Endothelial cell of umbilical vein (primary cell): ENCODE measurements at regions of chr19 and their contacts with region 1.

Region 1: DNA sequence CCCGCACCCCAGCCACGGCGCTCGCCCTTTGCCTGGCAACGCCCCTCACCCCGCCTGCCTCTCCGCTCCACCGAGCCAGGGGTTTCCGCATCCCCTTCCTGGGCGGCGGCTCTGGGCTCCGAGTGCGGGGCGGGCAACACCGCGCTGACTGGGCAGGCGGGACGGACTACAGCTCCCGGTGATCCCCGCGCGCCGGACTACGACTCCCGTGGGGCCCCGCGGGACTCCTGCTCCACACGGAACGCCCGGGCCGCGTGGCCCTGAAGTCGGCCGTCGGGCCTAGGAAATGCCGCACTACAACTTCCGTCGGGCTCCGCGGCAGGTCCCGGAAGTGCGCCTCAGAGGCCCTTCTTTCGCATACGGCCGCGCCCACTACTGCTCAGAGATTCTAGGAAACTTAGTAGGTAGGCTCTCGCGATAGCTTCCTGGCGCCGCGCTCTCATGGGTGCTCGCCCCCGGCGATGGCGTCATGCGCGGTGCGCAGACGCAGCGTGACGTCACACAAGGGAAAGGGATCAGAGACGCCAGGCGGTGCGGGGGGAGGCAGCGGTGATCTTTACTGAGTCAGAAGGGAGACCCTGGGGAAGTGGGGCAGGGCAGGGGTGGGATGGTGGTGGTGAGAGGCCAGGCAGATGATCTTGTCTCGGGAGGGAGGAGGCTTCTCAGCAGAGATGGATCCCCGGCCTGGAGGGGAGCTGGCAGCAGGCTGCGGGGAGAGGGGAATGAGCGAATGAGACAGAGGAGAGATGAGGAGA is at the start of gene JOSD2:
- DNase-seq: peak; percentile 99
- H3K4me3 ChIP-seq: peak within 1 kb of the TSS; percentile 56 to 76 (median 75)
- H3K27ac ChIP-seq: peak within 1 kb of the TSS; percentile 39
- H3K4me1 ChIP-seq: peaks cover 7% of the 10 kb centered on the region
- H3K27me3 ChIP-seq: no peaks in the 10 kb centered on the region
- CTCF ChIP-seq: no peak
- POLR2A ChIP-seq: peak; percentile 56
- total RNA-seq, gene JOSD2: 33.8 and 37.4 TPM in 2 replicates

Region 2: GRCh38 chr19:50376166-50377050 is 134.8 kb before region 1 on chr19 and contains the start of gene NR1H2:
- CTCF ChIA-PET with region 1: interaction called, 4 read pairs
- POLR2A ChIA-PET with region 1: no interaction called
- dilution Hi-C with region 1: no loop called
- intact Hi-C with region 1: loop called (anchors 2 kb)
- DNase-seq: peak; percentile 96
- H3K4me3 ChIP-seq: peak within 1 kb of the TSS; percentile 69 to 83 (median 77)
- H3K27ac ChIP-seq: peak within 1 kb of the TSS; percentile 94
- H3K4me1 ChIP-seq: peaks cover 13% of the 10 kb centered on the region
- H3K27me3 ChIP-seq: no peaks in the 10 kb centered on the region
- CTCF ChIP-seq: no peak
- POLR2A ChIP-seq: peak; percentile 64
- total RNA-seq, gene NR1H2: 46.7 and 50.6 TPM in 2 replicates

Region 3: GRCh38 chr19:50383852-50384684 is 127.2 kb before region 1 on chr19 and contains the start of gene POLD1:
- CTCF ChIA-PET with region 1: no interaction called
- POLR2A ChIA-PET with region 1: no interaction called
- dilution Hi-C with region 1: no loop called
- intact Hi-C with region 1: loop called (anchors 1 kb)
- DNase-seq: peak; percentile 99
- H3K4me3 ChIP-seq: peak within 1 kb of the TSS; percentile 71 to 94 (median 80)
- H3K27ac ChIP-seq: peak within 1 kb of the TSS; percentile 63
- H3K4me1 ChIP-seq: peaks cover 16% of the 10 kb centered on the region
- H3K27me3 ChIP-seq: no peaks in the 10 kb centered on the region
- CTCF ChIP-seq: no peak
- POLR2A ChIP-seq: peak; percentile 79
- total RNA-seq, gene POLD1: 63.9 and 73.8 TPM in 2 replicates

Region 4: GRCh38 chr19:50431343-50432220 is 79.7 kb before region 1 on chr19:
- CTCF ChIA-PET with region 1: no interaction called
- POLR2A ChIA-PET with region 1: no interaction called
- dilution Hi-C with region 1: no loop called
- intact Hi-C with region 1: loop called (anchors 1 kb)
- DNase-seq: peak; percentile 86
- H3K4me3 ChIP-seq: peak overlapping the region in 2 of 3 experiments; percentile 39 to 51
- H3K27ac ChIP-seq: no peak overlapping the region
- H3K4me1 ChIP-seq: peaks cover 6% of the 10 kb centered on the region
- H3K27me3 ChIP-seq: peaks cover 4 to 13% of the 10 kb centered on the region in 2 experiments
- CTCF ChIP-seq: no peak
- POLR2A ChIP-seq: no peak

Region 5: DNA sequence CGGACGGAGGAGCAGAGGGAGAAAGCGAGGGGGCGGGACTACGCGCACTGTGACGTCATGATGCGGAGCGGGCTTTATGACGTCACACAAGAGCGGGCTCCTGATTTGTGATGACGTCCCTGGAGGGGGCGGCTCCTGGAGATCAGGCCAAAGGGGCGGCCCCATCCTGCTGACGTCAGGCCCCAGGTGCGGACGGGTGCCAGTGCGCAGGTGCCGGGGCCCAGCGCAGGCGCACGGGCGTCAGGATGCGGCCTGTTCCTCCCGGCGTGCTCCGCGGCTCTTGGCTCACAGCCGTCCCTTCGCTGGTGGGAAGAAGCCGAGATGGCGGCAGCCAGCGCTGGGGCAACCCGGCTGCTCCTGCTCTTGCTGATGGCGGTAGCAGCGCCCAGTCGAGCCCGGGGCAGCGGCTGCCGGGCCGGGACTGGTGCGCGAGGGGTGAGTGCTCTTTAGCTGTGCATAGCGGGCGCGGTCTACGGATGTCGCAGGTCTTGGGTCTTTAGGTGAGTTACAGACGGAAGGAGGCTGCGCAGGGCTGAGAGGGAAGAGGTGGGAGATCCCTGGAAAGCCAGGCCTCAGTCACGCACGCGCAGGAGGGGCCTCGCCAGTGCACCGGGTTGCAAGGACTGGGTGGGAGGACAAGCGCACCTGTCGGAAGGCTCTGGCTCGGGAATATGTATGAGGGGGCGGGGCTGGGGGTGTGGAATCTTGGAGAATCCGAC is 34.9 kb before region 1 on chr19 and contains the starts of genes EMC10 and GARIN5A:
- CTCF ChIA-PET with region 1: interaction called, 3 read pairs
- POLR2A ChIA-PET with region 1: no interaction called
- dilution Hi-C with region 1: no loop called
- intact Hi-C with region 1: loop called (anchors 1 kb)
- DNase-seq: peak; percentile 94
- H3K4me3 ChIP-seq: peak within 1 kb of the TSS; percentile 84 to 98 (median 87)
- H3K27ac ChIP-seq: peak within 1 kb of the TSS; percentile 48
- H3K4me1 ChIP-seq: peaks cover 7% of the 10 kb centered on the region
- H3K27me3 ChIP-seq: no peaks in the 10 kb centered on the region
- CTCF ChIP-seq: no peak
- POLR2A ChIP-seq: peak; percentile 96
- total RNA-seq, gene EMC10: 101 and 106 TPM in 2 replicates
- total RNA-seq, gene GARIN5A: 0.44 and 0.62 TPM in 2 replicates

Region 6: GRCh38 chr19:50493175-50493574 is 18.1 kb before region 1 on chr19:
- CTCF ChIA-PET with region 1: no interaction called
- POLR2A ChIA-PET with region 1: no interaction called
- dilution Hi-C with region 1: no loop called
- intact Hi-C with region 1: no loop called
- DNase-seq: no peak
- H3K4me3 ChIP-seq: no peak overlapping the region
- H3K27ac ChIP-seq: no peak overlapping the region
- H3K4me1 ChIP-seq: no peaks in the 10 kb centered on the region
- H3K27me3 ChIP-seq: peaks cover 8 to 10% of the 10 kb centered on the region in 2 experiments
- CTCF ChIP-seq: no peak
- POLR2A ChIP-seq: no peak

Region 7: DNA sequence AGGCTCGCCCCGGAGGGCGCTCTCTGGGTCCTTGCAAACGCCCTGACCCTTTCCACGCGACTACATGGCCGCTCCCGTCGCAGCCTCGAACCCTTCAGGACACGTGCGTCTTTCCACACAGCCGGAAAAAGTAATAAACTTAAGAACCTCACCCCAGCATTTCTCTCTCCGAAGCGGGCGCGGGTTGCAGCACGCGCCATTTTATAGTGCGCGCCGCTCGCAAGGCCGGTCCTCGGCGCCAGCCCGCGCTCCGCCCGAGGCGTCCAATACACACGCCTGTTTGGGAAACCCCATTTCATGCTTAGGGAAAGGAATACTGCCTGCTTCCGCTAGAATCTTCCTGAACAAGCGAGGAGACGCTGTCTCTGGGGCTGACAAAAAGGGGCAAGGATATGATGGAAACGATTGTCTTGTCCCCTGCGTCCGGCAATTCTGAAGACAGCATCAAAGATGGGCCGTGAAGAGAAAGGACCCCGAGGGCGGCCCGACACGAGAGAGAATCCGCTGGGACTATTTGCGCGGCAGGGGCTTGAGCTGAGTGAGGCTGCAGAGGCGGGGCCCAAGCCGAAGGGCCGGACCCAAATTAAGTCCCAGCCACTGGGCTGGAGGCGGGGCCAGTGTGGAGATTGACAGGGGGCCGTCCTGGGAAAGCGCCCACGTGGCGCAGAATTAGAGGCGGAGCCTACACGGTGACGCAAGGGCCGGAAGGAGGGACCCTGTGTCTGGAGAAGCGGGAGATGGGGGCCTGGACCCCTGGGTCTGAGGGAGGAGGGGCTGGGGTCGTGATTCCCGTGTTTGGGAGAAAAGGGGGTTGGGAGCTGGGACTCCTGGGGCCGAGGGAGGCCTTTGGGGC is 293.4 kb after region 1 on chr19:
- CTCF ChIA-PET with region 1: no interaction called
- POLR2A ChIA-PET with region 1: no interaction called
- dilution Hi-C with region 1: no loop called
- intact Hi-C with region 1: loop called (anchors 1 kb)
- DNase-seq: peak; percentile 98
- H3K4me3 ChIP-seq: peak overlapping the region; percentile 94 to 100 (median 97)
- H3K27ac ChIP-seq: peak overlapping the region; percentile 98
- H3K4me1 ChIP-seq: peaks cover 12% of the 10 kb centered on the region
- H3K27me3 ChIP-seq: no peaks in the 10 kb centered on the region
- CTCF ChIP-seq: no peak
- POLR2A ChIP-seq: peak; percentile 87

Region 8: GRCh38 chr19:51108066-51108804 is 597.0 kb after region 1 on chr19 and contains the start of gene CTU1:
- CTCF ChIA-PET with region 1: no interaction called
- POLR2A ChIA-PET with region 1: no interaction called
- dilution Hi-C with region 1: no loop called
- intact Hi-C with region 1: loop called (anchors 1 kb)
- DNase-seq: peak; percentile 99
- H3K4me3 ChIP-seq: peak within 1 kb of the TSS; percentile 56 to 65 (median 64)
- H3K27ac ChIP-seq: peak within 1 kb of the TSS; percentile 51
- H3K4me1 ChIP-seq: peaks cover 11% of the 10 kb centered on the region
- H3K27me3 ChIP-seq: peaks cover 0 to 9% of the 10 kb centered on the region in 2 experiments
- CTCF ChIP-seq: no peak
- POLR2A ChIP-seq: peak; percentile 89
- total RNA-seq, gene CTU1: 8.2 and 8.7 TPM in 2 replicates